ENCODE measurements at regions of chr17 and their contacts with region 1.

Region 1: DNA sequence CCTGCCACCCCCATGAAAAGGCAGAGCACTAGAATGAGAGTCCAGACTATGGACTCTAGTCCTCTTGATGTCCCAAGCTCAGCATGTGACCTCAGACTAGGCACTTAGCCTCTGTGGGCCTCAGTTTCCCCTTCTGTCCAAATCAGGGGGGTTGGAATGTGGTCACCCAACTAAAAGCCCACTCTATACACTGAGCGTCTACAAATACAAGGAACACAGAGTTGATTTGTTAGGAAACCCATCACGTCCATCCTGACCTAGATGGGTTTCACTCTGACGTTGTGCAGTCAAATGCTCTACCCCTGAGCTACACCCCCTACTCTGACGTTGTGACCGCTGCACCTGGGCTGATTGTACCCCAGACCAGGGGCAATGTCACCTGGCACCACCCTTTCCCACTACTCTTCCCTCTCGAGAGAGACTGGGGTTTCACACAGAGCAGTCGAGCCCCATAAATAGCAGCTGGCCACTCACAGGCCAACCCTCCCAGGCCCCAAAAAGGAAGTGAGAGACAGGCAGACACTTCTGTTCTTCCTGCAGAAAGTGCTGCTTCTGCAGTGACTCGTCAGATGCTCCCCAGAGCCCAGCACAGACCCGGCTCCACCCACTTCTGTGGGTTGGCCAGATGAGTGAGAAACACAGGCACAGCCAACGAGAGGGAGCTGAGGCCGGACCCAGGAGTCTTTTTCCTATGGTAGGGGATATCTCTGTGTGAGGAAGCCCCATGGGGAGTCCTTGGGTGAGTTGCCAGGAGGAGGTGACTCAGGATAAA is 16.1 kb upstream of the TNFRSF13B start:
- DNase-seq: peak; percentile 99
- ATAC-seq: peak; percentile 77
- H3K4me3 ChIP-seq: peak overlapping the region; percentile 62
- H3K27ac ChIP-seq: peak overlapping the region; percentile 96
- H3K4me1 ChIP-seq: peaks cover 65% of the 10 kb centered on the region
- H3K27me3 ChIP-seq: no peaks in the 10 kb centered on the region
- CTCF ChIP-seq: no peak
- EP300 ChIP-seq: peak in 1 of 2 experiments; percentile 95
- POLR2A ChIP-seq: peak; percentile 75; the same call in 1 of the 2 replicates
- RAD21 ChIP-seq: no peak

Region 2: DNA sequence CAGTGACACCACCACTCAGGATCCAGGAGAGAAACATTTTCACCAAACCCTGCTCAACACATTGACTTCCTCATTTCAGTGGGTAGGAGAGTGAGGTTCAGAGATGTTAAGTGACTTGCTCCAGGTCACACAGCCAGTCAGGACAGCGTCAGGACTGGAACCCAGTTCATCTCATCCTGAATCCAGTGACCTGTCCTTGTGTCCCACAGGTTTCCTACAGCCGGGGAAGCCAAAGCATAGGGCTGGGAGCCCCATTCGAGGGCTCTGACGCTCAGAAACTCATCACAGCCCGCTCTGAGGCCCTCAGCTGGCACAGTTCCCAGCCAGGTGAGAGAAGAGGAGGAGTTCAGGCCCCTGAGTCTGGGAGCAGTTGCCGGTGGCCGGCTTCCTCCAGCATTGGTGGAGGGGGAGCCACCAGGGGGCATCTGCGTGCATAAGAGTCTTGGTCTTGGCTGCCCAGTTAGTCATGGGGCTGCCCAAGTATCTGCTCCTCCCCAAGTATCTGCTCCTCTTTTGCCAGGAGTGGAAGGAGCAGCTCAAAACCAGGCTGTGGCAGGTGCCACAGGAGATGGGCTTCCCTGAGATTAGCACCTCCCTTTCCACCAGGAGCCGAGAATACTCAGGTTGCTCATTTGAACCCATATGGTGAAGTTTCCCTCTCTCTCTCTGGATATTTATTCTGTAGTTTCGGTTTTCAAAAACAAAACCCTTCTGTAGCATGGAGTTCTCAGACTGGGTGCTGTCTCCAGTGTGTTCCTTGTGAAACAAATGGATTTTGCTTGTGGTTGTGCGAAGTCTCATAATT is 72.1 kb before region 1 on chr17:
- CTCF ChIA-PET with region 1: interaction called, 92 read pairs
- POLR2A ChIA-PET with region 1: interaction called, 3 read pairs
- RAD21 ChIA-PET with region 1: interaction called, 27 read pairs
- SMC1A ChIA-PET with region 1: interaction called, 43 read pairs
- in situ Hi-C with region 1: no loop called
- intact Hi-C with region 1: loop called (anchors 1 kb)
- DNase-seq: peak; percentile 17
- ATAC-seq: peak; percentile 95
- H3K4me3 ChIP-seq: no peak overlapping the region
- H3K27ac ChIP-seq: no peak overlapping the region
- H3K4me1 ChIP-seq: peaks cover 8% of the 10 kb centered on the region
- H3K27me3 ChIP-seq: 0 out of 4 replicates have a peak, but pooled peaks cover 0 to 1% of the 10 kb centered on the region in 2 experiments
- CTCF ChIP-seq: peak; percentile 69 to 86 (median 72)
- EP300 ChIP-seq: no peak
- POLR2A ChIP-seq: no peak
- RAD21 ChIP-seq: peak; percentile 65

Region 3: DNA sequence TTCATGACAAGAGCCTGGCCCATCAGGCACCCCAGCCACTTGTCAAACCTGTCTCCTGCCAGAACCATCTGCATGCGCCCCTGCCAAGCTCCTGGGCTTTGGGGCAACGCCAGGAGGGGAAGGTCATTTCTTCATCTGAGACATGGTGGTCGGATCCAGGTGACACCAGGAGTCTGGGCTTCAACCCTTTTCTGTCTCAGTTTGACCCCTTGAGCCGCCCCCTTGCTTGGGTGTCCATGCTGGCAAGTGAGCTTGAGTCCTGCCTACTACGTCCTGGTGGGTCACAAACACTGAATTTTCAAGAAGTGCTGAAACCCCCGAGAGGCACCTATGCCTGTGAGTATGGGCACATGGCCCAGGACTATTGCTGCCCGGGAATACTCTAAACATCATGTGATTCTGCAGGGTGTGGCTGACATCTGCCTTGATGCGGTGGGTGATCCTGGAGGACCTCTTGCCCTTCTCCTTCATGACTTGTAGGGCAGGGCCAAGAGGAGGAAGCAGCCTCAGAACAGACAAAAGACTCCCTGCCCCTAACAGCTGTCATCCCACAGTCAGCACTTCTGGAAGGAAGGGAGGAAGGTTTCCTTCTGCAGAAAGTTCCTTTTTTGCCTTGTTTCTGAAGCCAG is 59.5 kb before region 1 on chr17:
- CTCF ChIA-PET with region 1: no interaction called
- POLR2A ChIA-PET with region 1: no interaction called
- RAD21 ChIA-PET with region 1: no interaction called
- SMC1A ChIA-PET with region 1: no interaction called
- in situ Hi-C with region 1: no loop called
- intact Hi-C with region 1: no loop called
- DNase-seq: no peak
- ATAC-seq: no peak
- H3K4me3 ChIP-seq: no peak overlapping the region
- H3K27ac ChIP-seq: no peak overlapping the region
- H3K4me1 ChIP-seq: no peaks in the 10 kb centered on the region
- H3K27me3 ChIP-seq: no peaks in the 10 kb centered on the region
- CTCF ChIP-seq: no peak
- EP300 ChIP-seq: no peak
- POLR2A ChIP-seq: no peak
- RAD21 ChIP-seq: no peak

Region 4: DNA sequence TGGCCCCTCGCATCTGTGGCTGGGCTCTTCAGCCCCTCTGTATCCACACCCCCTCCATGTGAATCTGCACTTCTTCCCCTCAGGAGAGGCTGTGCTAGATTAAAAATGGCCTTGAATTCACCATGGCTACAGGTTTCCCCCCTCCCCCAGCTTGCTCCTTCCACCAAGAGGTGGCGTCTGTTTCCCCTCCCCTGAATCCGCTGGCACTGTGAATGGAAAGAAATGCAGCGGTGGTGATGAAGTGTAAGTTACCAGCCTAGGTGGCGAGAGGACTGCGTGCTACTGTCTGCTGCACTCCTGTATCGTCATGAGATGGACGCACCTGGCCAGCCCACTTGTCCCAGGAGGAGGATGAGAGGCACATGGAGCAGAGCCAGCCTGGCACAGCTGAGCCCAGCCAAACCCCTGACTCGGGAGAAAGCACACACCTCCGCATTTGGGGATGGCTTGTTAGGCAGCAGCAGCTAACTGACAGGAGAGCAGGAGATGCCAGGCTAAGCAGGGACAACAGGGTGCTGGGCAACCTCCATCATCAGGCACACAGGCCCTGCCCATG is 42.3 kb before region 1 on chr17:
- CTCF ChIA-PET with region 1: interaction called, 11 read pairs
- POLR2A ChIA-PET with region 1: interaction called, 18 read pairs
- RAD21 ChIA-PET with region 1: interaction called, 6 read pairs
- SMC1A ChIA-PET with region 1: interaction called, 6 read pairs
- in situ Hi-C with region 1: no loop called
- intact Hi-C with region 1: loop called (anchors 10 kb)
- DNase-seq: no peak
- ATAC-seq: no peak
- H3K4me3 ChIP-seq: no peak overlapping the region
- H3K27ac ChIP-seq: peak overlapping the region; percentile 7; the same call in 1 of the 2 replicates
- H3K4me1 ChIP-seq: peaks cover 25% of the 10 kb centered on the region
- H3K27me3 ChIP-seq: no peaks in the 10 kb centered on the region
- CTCF ChIP-seq: peak in 1 of 3 experiments; percentile 16; a peak in 1 of 6 replicates
- EP300 ChIP-seq: no peak
- POLR2A ChIP-seq: no peak; the same call in 1 of the 2 replicates
- RAD21 ChIP-seq: no peak

Region 5: DNA sequence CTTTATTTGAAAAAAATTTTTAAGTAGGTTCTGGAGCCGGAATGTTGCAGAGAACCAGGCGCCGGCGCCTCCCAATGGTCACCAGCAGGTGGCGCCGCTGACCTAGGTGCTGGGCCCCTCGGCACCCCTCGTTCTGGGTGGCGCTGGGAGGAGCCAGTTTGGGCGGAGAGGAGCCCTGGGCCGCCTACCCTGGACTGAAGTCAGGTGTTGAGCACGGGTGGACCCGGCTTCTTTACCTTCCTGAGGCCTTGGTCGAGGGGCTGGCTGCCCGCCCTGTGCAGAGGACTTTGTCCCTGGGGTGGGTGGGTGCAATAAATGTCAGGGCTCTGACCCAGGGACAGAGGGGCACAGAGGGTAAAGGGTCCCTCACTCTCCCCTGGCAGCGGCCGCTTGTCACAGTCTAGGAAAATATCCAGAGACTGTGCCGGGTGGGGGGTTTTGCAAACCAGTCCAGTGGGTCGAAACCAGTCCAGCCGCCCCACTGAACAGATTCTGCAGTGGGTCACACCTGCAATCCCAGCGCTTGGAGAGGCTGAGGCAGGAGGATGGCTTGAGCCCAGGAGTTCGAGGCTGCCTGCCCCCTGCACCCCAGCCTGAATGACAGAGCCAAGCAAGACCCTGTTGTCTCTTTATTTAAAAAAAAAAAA is 14.0 kb after region 1 on chr17:
- CTCF ChIA-PET with region 1: interaction called, 16 read pairs
- POLR2A ChIA-PET with region 1: no interaction called
- RAD21 ChIA-PET with region 1: no interaction called
- SMC1A ChIA-PET with region 1: interaction called, 4 read pairs
- in situ Hi-C with region 1: no loop called
- intact Hi-C with region 1: no loop called
- DNase-seq: no peak
- ATAC-seq: peak; percentile 98
- H3K4me3 ChIP-seq: no peak overlapping the region
- H3K27ac ChIP-seq: no peak overlapping the region
- H3K4me1 ChIP-seq: no peaks in the 10 kb centered on the region
- H3K27me3 ChIP-seq: no peaks in the 10 kb centered on the region
- CTCF ChIP-seq: peak; percentile 94 to 96 (median 95)
- EP300 ChIP-seq: no peak
- POLR2A ChIP-seq: no peak
- RAD21 ChIP-seq: peak; percentile 98